ENCODE measurements at regions of chr7 and their contacts with region 1.

Region 1: GRCh38 chr7:16071246-16071857 is 350.0 kb downstream of the CRPPA start:
- DNase-seq: peak; percentile 34
- H3K4me3 Mint-ChIP-seq: no peak overlapping the region
- H3K27ac Mint-ChIP-seq: no peak overlapping the region
- H3K4me1 Mint-ChIP-seq: peaks cover 10% of the 10 kb centered on the region
- H3K27me3 Mint-ChIP-seq: no peaks in the 10 kb centered on the region
- CTCF ChIP-seq: peak; percentile 86

Region 2: GRCh38 chr7:15199482-15199881 is 871.9 kb before region 1 on chr7:
- CTCF ChIA-PET with region 1: no interaction called
- intact Hi-C with region 1: loop called (anchors 2 kb)
- DNase-seq: no peak
- H3K4me3 Mint-ChIP-seq: no peak overlapping the region
- H3K27ac Mint-ChIP-seq: no peak overlapping the region
- H3K4me1 Mint-ChIP-seq: peaks cover 12% of the 10 kb centered on the region
- H3K27me3 Mint-ChIP-seq: no peaks in the 10 kb centered on the region
- CTCF ChIP-seq: peak; percentile 41

Region 3: GRCh38 chr7:15305002-15305600 is 766.3 kb before region 1 on chr7:
- CTCF ChIA-PET with region 1: no interaction called
- intact Hi-C with region 1: loop called (anchors 1 kb)
- DNase-seq: peak; percentile 78
- H3K4me3 Mint-ChIP-seq: no peak overlapping the region
- H3K27ac Mint-ChIP-seq: no peak overlapping the region
- H3K4me1 Mint-ChIP-seq: no peaks in the 10 kb centered on the region
- H3K27me3 Mint-ChIP-seq: no peaks in the 10 kb centered on the region
- CTCF ChIP-seq: peak; percentile 68

Region 4: GRCh38 chr7:15326044-15326644 is 745.2 kb before region 1 on chr7:
- CTCF ChIA-PET with region 1: no interaction called
- intact Hi-C with region 1: loop called (anchors 1 kb)
- DNase-seq: no peak
- H3K4me3 Mint-ChIP-seq: no peak overlapping the region
- H3K27ac Mint-ChIP-seq: no peak overlapping the region
- H3K4me1 Mint-ChIP-seq: no peaks in the 10 kb centered on the region
- H3K27me3 Mint-ChIP-seq: no peaks in the 10 kb centered on the region
- CTCF ChIP-seq: peak; percentile 58

Region 5: GRCh38 chr7:16346375-16347018 is 275.1 kb after region 1 on chr7:
- CTCF ChIA-PET with region 1: no interaction called
- intact Hi-C with region 1: no loop called
- DNase-seq: peak; percentile 63
- H3K4me3 Mint-ChIP-seq: peak overlapping the region; percentile 8
- H3K27ac Mint-ChIP-seq: peak overlapping the region; percentile 48
- H3K4me1 Mint-ChIP-seq: peaks cover 57% of the 10 kb centered on the region
- H3K27me3 Mint-ChIP-seq: no peaks in the 10 kb centered on the region
- CTCF ChIP-seq: no peak

Measured in Calu3 (cell line).